HepG2 (cell line): ENCODE measurements at regions of chr17 and their contacts with region 1.

Region 1: GRCh38 chr17:68759343-68760132 is 158.4 kb upstream of the FAM20A start:
- DNase-seq: peak; percentile 91
- ATAC-seq: peak; percentile 99
- H3K4me3 ChIP-seq: peak overlapping the region; percentile 60 to 67 (median 61)
- H3K27ac ChIP-seq: peak overlapping the region; percentile 92
- H3K4me1 ChIP-seq: peaks cover 35% of the 10 kb centered on the region
- H3K27me3 ChIP-seq: 0 out of 5 replicates have a peak, but pooled peaks cover 0 to 4% of the 10 kb centered on the region in 2 experiments
- CTCF ChIP-seq: peak; percentile 97
- EP300 ChIP-seq: peak in 1 of 2 experiments; percentile 58; a peak in 2 of 4 replicates
- POLR2A ChIP-seq: peak; percentile 63 to 90; a peak in 3 of 4 replicates
- RAD21 ChIP-seq: peak; percentile 97

Region 2: DNA sequence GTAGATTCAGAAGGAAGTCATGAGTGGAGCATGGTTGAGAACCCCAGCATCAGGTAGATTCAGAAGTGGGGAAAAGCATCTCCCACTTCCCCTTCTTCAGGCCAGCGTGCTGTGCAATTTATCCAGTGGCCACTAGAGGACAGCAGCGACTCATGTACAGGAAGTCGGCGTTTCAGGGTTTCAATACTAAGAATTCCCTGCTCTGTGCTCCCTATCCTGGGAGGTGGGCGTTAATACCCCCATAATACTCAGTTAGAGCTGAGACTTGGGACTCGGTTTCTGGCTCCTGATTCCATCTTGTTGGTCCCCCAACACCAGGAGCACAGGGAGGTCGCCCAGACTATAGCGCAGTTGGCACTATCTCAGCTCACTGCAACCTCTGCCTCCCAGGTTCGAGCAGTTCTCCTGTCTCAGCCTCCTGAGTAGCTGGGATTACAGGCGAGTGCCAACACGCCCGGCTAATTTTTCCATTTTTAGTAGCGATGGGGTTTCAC is 587.0 kb before region 1 on chr17:
- CTCF ChIA-PET with region 1: no interaction called
- POLR2A ChIA-PET with region 1: no interaction called
- in situ Hi-C with region 1: loop called (anchors 25 kb)
- intact Hi-C with region 1: no loop called
- DNase-seq: peak; percentile 67
- ATAC-seq: peak; percentile 68
- H3K4me3 ChIP-seq: no peak overlapping the region
- H3K27ac ChIP-seq: no peak overlapping the region
- H3K4me1 ChIP-seq: peaks cover 37% of the 10 kb centered on the region
- H3K27me3 ChIP-seq: peaks cover 0 to 9% of the 10 kb centered on the region in 2 experiments; a peak in 2 of 5 replicates
- CTCF ChIP-seq: peak; percentile 97
- EP300 ChIP-seq: no peak
- POLR2A ChIP-seq: no peak
- RAD21 ChIP-seq: peak; percentile 94

Region 3: GRCh38 chr17:68533887-68534694 is 225.4 kb before region 1 on chr17:
- CTCF ChIA-PET with region 1: interaction called, 4 read pairs
- POLR2A ChIA-PET with region 1: no interaction called
- in situ Hi-C with region 1: loop called (anchors 5 kb)
- intact Hi-C with region 1: loop called (anchors 1 kb)
- DNase-seq: no peak
- ATAC-seq: no peak
- H3K4me3 ChIP-seq: no peak overlapping the region
- H3K27ac ChIP-seq: no peak overlapping the region
- H3K4me1 ChIP-seq: peaks cover 18% of the 10 kb centered on the region
- H3K27me3 ChIP-seq: no peaks in the 10 kb centered on the region
- CTCF ChIP-seq: 0 out of 2 replicates have a peak, but pooled peaks have one; percentile 34
- EP300 ChIP-seq: no peak
- POLR2A ChIP-seq: no peak; a peak in 1 of 4 replicates
- RAD21 ChIP-seq: no peak

Region 4: GRCh38 chr17:68608515-68609130 is 150.9 kb before region 1 on chr17:
- CTCF ChIA-PET with region 1: interaction called, 5 read pairs
- POLR2A ChIA-PET with region 1: interaction called, 3 read pairs
- in situ Hi-C with region 1: loop called (anchors 5 kb)
- intact Hi-C with region 1: loop called (anchors 1 kb)
- DNase-seq: no peak
- ATAC-seq: no peak
- H3K4me3 ChIP-seq: no peak overlapping the region
- H3K27ac ChIP-seq: no peak overlapping the region
- H3K4me1 ChIP-seq: peaks cover 52% of the 10 kb centered on the region
- H3K27me3 ChIP-seq: no peaks in the 10 kb centered on the region; a peak in 1 of 5 replicates
- CTCF ChIP-seq: no peak
- EP300 ChIP-seq: no peak
- POLR2A ChIP-seq: no peak
- RAD21 ChIP-seq: no peak

Region 5: GRCh38 chr17:68740555-68741447 is 18.7 kb before region 1 on chr17:
- CTCF ChIA-PET with region 1: interaction called, 7 read pairs
- POLR2A ChIA-PET with region 1: no interaction called
- in situ Hi-C with region 1: no loop called
- intact Hi-C with region 1: loop called (anchors 1 kb)
- DNase-seq: no peak
- ATAC-seq: peak; percentile 81
- H3K4me3 ChIP-seq: no peak overlapping the region
- H3K27ac ChIP-seq: no peak overlapping the region
- H3K4me1 ChIP-seq: no peaks in the 10 kb centered on the region
- H3K27me3 ChIP-seq: peaks cover 0 to 13% of the 10 kb centered on the region in 2 experiments; a peak in 3 of 5 replicates
- CTCF ChIP-seq: peak; percentile 50
- EP300 ChIP-seq: no peak
- POLR2A ChIP-seq: no peak
- RAD21 ChIP-seq: no peak

Region 6: DNA sequence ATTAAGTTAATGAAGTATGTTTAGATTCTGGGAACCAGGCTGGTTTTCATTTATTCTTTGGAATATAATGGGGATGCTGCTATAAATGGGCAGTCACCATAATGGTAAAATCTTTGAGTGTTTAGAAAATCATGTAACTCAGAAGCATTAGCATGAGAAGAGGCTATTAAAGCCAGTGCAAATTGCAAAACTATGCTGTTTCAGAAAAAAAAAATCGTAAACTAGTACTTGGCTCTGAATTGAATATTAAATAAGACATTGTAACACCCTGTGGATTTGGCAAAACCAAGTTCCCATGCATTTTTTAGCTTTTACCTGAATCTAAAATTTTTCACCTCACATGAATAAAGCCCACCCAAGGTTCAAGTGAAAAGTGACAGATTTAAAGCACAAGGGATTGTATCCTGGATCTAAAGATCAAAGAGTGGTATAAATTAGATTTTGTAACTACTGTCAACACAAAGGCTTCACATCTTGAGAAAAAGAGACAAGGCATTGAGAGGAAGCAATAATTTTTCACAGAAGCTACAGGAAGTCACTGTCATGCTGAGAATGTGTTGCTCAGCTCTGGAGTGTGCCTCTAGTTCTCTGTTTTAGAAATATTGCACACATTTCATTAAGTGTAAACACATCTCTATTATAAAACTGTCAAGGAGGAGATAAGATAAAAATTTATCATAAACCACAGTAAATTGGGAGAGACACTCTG is 53.5 kb after region 1 on chr17:
- CTCF ChIA-PET with region 1: no interaction called
- POLR2A ChIA-PET with region 1: no interaction called
- in situ Hi-C with region 1: no loop called
- intact Hi-C with region 1: no loop called
- DNase-seq: no peak
- ATAC-seq: no peak
- H3K4me3 ChIP-seq: no peak overlapping the region
- H3K27ac ChIP-seq: no peak overlapping the region
- H3K4me1 ChIP-seq: peaks cover 12% of the 10 kb centered on the region
- H3K27me3 ChIP-seq: no peaks in the 10 kb centered on the region
- CTCF ChIP-seq: no peak
- EP300 ChIP-seq: no peak
- POLR2A ChIP-seq: no peak
- RAD21 ChIP-seq: no peak